A673 (cell line): ENCODE measurements at regions of chr12 and their contacts with region 1.

Region 1: DNA sequence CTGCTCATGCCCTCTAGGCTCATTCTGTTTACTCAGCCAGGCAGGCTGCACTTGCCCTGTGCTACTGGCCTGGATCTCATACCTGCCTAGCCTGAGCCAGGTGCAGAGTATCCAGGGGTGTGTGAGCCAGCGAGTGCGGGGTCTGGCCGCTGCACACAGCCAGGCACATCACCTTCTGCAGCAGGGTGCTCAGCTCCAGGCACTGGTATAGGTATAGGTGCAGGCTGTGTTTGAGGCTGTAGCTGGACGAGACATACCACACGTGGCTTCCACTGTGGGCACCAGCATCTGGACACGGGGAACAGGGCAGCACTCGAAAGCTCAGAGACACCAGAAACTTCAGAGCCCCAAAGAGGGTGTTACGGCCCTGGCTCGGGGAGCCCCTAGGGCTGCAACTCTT is 424.2 kb downstream of the RERGL start:
- DNase-seq: no peak
- H3K4me3 ChIP-seq: no peak overlapping the region
- H3K27ac ChIP-seq: no peak overlapping the region
- H3K4me1 ChIP-seq: no peaks in the 10 kb centered on the region
- H3K27me3 ChIP-seq: no peaks in the 10 kb centered on the region
- CTCF ChIP-seq: no peak

Region 2: GRCh38 chr12:17652436-17652835 is 13.4 kb before region 1 on chr12:
- CTCF ChIA-PET with region 1: no interaction called
- POLR2A ChIA-PET with region 1: no interaction called
- intact Hi-C with region 1: loop called (anchors 1 kb)
- DNase-seq: no peak
- H3K4me3 ChIP-seq: no peak overlapping the region
- H3K27ac ChIP-seq: no peak overlapping the region
- H3K4me1 ChIP-seq: peaks cover 10% of the 10 kb centered on the region
- H3K27me3 ChIP-seq: no peaks in the 10 kb centered on the region
- CTCF ChIP-seq: no peak

Region 3: DNA sequence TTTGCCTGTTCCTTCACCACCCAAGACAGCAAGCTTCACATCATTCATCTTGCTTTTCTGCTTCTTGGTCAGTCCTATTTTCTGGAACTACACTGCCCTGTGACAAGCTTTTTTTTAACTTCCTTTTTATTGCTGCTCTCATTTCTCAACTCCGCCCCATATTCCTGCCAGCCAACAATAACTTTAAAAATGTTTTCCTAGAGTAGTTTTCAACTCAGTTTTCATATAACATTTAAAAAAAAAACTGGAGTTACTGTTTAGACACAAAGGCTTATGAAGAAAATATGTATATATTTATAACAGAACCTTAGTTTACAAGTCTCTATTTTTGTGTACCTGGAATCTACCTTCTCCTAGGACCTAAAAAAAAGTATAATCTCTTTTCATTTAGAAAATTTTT is 424.3 kb after region 1 on chr12 and contains the start of gene RERGL:
- CTCF ChIA-PET with region 1: no interaction called
- POLR2A ChIA-PET with region 1: no interaction called
- intact Hi-C with region 1: no loop called
- DNase-seq: no peak
- H3K4me3 ChIP-seq: no peak within 1 kb of the TSS
- H3K27ac ChIP-seq: no peak within 1 kb of the TSS
- H3K4me1 ChIP-seq: no peaks in the 10 kb centered on the region
- H3K27me3 ChIP-seq: no peaks in the 10 kb centered on the region
- CTCF ChIP-seq: no peak
- total RNA-seq, gene RERGL: not detected in 2 replicates

Region 4: GRCh38 chr12:18207266-18207665 is 541.4 kb after region 1 on chr12:
- CTCF ChIA-PET with region 1: no interaction called
- POLR2A ChIA-PET with region 1: no interaction called
- intact Hi-C with region 1: no loop called
- DNase-seq: no peak
- H3K4me3 ChIP-seq: no peak overlapping the region
- H3K27ac ChIP-seq: no peak overlapping the region
- H3K4me1 ChIP-seq: no peaks in the 10 kb centered on the region
- H3K27me3 ChIP-seq: no peaks in the 10 kb centered on the region
- CTCF ChIP-seq: no peak